Caco-2 (cell line): ENCODE measurements at regions of chr12 and their contacts with region 1.

Region 1: DNA sequence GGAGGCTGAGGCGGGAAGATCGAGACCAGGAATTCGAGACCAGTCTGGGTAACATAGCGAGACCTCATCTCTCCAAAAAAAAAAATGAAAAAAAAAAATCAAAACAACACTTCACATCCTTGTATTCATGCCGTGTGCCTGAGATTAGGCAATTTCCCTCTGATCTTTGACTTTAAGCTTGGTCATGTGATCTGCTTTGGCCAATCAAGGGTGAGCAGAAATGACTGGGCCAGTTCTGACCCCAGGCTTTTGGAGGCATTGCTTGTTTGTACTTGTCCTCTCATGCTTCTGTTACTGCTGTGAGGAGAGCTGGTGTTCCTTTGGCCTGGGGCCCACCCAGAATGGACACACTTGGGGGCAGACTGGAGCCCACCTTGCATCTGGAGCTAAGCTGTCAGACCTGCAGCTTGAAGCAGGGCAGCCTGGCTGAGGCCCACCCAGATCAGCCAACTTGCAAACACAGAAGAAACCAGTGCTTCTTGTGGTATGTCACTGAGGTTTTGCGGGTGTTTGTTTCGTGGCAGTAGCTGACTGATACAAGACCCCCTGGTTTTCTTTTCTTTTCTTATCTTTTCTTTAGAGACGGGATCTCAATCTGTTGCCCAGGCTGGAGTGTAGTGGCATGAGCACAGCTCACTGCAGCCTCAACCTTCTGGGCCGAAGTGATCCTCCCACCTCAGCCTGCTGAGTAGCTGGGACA is 29.7 kb upstream of the TBX3 start:
- DNase-seq: no peak
- H3K4me3 ChIP-seq: no peak overlapping the region
- H3K4me3 Mint-ChIP-seq: no peak overlapping the region
- H3K27ac Mint-ChIP-seq: no peak overlapping the region
- H3K4me1 ChIP-seq: peaks cover 38% of the 10 kb centered on the region
- H3K4me1 Mint-ChIP-seq: peaks cover 24% of the 10 kb centered on the region
- H3K27me3 ChIP-seq: no peaks in the 10 kb centered on the region
- H3K27me3 Mint-ChIP-seq: no peaks in the 10 kb centered on the region
- CTCF ChIP-seq: no peak

Region 2: DNA sequence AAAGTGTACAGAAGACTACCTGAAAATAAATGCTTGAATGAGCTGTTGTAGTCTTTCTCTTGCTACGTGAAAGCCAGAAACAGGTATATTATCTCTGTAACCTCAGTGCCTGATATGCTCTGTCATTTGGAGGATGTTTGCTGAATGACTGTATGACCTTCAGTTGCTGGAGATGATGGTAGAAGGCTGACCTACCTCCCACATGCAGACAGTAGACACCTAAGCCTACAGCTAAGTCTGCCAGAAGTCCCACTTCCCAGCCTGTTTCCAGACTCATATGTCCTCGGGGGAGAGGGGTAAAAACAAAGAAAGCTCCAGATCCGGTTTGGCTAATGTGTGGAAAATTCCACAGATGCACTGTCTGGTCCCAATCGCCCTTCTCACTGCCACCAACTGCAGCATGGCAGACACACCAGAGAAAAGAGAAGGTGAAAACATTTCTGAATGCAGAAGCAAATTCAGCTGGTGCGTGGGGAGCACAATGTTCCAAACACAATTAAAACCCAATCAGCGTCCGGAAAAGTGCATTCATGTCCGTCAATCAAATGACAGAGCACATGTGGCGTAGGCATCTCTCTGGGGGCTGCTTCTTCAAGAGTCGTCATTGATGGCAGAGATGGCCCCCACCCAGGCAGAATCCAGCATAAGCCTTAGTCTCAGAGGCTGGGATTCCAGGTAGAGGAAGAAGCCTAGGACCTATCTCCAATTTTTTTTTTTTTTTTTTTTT is 46.6 kb after region 1 on chr12:
- CTCF ChIA-PET with region 1: no interaction called
- POLR2A ChIA-PET with region 1: interaction called, 12 read pairs
- intact Hi-C with region 1: no loop called
- DNase-seq: no peak
- H3K4me3 ChIP-seq: no peak overlapping the region
- H3K4me3 Mint-ChIP-seq: no peak overlapping the region
- H3K27ac Mint-ChIP-seq: no peak overlapping the region
- H3K4me1 ChIP-seq: no peaks in the 10 kb centered on the region
- H3K4me1 Mint-ChIP-seq: no peaks in the 10 kb centered on the region
- H3K27me3 ChIP-seq: no peaks in the 10 kb centered on the region
- H3K27me3 Mint-ChIP-seq: no peaks in the 10 kb centered on the region
- CTCF ChIP-seq: no peak

Region 3: GRCh38 chr12:114817571-114818425 is 104.1 kb after region 1 on chr12:
- CTCF ChIA-PET with region 1: no interaction called
- POLR2A ChIA-PET with region 1: no interaction called
- intact Hi-C with region 1: no loop called
- DNase-seq: no peak
- H3K4me3 ChIP-seq: no peak overlapping the region
- H3K4me3 Mint-ChIP-seq: no peak overlapping the region
- H3K27ac Mint-ChIP-seq: no peak overlapping the region
- H3K4me1 ChIP-seq: peaks cover 10% of the 10 kb centered on the region
- H3K4me1 Mint-ChIP-seq: peaks cover 15% of the 10 kb centered on the region
- H3K27me3 ChIP-seq: no peaks in the 10 kb centered on the region
- H3K27me3 Mint-ChIP-seq: no peaks in the 10 kb centered on the region
- CTCF ChIP-seq: no peak